Gastrocnemius medialis (tissue), 4 donors: ENCODE measurements at regions of chr1 and their contacts with region 1.

Region 1: GRCh38 chr1:244280859-244281258 is 170.8 kb downstream of the ADSS2 start:
- DNase-seq: no peak
- ATAC-seq: no peak
- H3K4me3 ChIP-seq: no peak overlapping the region
- H3K27ac ChIP-seq: no peak overlapping the region
- H3K4me1 ChIP-seq: no peaks in the 10 kb centered on the region
- H3K27me3 ChIP-seq: no peaks in the 10 kb centered on the region
- CTCF ChIP-seq: no peak
- POLR2A ChIP-seq: no peak

Region 2: GRCh38 chr1:243335292-243335691 is 945.6 kb before region 1 on chr1:
- in situ Hi-C with region 1: loop called in 2 of 4 experiments (anchors 10 kb)
- intact Hi-C with region 1: no loop called
- DNase-seq: no peak
- ATAC-seq: no peak
- H3K4me3 ChIP-seq: no peak overlapping the region
- H3K27ac ChIP-seq: no peak overlapping the region
- H3K4me1 ChIP-seq: peaks cover 10 to 13% of the 10 kb centered on the region in 2 donors
- H3K27me3 ChIP-seq: no peaks in the 10 kb centered on the region
- CTCF ChIP-seq: no peak
- POLR2A ChIP-seq: no peak